Activated naive CD8-positive, alpha-beta T cell treated with anti-CD3 and anti-CD28 coated beads, Interleukin-2, amount 10 ng/mL, durations not matched to agents 7 days and 5 days (primary cell): ENCODE measurements at regions of chr13 and their contacts with region 1.

Region 1: DNA sequence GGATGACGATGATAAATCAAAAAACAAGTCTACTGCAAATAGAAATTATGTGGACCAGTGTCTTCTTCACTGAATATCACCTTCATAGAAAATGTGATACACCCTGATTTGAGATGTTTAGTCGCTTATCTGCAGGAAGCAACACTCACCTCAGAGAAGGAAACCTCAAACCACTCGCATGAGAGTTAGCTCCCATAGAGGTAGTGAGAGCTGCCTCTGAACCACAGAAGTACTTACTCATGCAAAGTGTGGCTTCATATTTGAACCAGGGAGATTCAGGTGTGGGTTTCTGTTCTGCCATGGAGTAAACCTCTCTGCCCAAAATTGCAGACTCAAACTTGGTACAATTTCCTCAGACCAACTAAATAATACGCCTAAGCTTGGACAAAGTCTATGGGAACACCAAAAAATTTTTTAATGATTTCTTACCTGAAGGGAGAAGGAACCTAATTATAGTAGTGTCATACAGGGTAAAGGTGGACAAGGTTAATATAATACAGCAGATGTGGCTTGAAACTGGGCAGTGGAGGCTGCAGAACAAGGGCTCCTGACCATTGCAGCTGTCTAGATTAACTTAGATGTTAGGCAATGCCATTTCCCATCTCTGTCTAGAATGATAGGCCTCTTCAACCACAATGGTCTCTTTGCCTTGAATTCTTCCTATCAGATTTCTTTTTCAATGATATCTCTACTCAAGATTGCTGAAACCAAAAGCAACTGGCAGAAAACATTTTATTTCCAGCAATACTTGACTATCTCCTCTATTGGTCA is 29.6 kb upstream of the RCBTB2 start:
- DNase-seq: no peak
- ATAC-seq: peak; percentile 87
- H3K4me3 Mint-ChIP-seq: peak overlapping the region; percentile 79
- H3K27ac Mint-ChIP-seq: peak overlapping the region; percentile 74
- H3K4me1 Mint-ChIP-seq: peaks cover 53% of the 10 kb centered on the region
- H3K27me3 Mint-ChIP-seq: peaks cover 49% of the 10 kb centered on the region

Region 2: DNA sequence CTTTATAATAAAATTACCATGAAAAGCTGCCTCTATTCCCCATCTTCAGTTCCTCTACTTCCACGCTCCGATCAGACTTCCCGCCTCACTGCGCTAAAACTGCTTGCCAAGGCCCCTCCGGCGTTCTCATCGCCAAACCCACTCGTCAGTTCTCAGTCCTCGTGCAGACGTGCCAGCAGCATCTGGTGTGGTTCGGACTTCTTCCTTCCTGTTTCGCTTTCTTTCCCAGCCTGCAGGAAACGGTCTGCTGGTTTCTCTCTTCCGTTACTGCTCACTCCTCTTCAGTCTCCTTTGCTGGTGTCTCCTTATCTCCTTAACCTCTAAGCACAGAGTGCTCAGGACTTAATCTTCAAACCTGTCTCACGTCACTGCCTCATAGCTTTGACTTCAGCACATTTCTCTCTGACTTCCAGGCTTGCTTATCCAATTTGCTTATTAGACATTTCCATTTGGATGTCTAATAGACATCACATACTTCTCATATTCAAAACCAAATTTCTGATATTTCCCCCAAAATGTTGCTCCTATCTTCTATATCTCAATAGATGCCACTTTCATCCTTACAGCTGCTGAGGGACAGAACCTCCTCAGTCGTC is 69.9 kb before region 1 on chr13:
- POLR2A ChIA-PET with region 1: interaction called, 11 read pairs
- DNase-seq: peak; percentile 70
- ATAC-seq: peak; percentile 85
- H3K4me3 Mint-ChIP-seq: no peak overlapping the region
- H3K27ac Mint-ChIP-seq: no peak overlapping the region
- H3K4me1 Mint-ChIP-seq: peaks cover 43% of the 10 kb centered on the region
- H3K27me3 Mint-ChIP-seq: no peaks in the 10 kb centered on the region

Region 3: GRCh38 chr13:48505597-48506091 is 56.8 kb before region 1 on chr13:
- POLR2A ChIA-PET with region 1: interaction called, 10 read pairs
- DNase-seq: peak; percentile 54
- ATAC-seq: peak; percentile 88
- H3K4me3 Mint-ChIP-seq: peak overlapping the region; percentile 67
- H3K27ac Mint-ChIP-seq: peak overlapping the region; percentile 92
- H3K4me1 Mint-ChIP-seq: peaks cover 62% of the 10 kb centered on the region
- H3K27me3 Mint-ChIP-seq: no peaks in the 10 kb centered on the region

Region 4: DNA sequence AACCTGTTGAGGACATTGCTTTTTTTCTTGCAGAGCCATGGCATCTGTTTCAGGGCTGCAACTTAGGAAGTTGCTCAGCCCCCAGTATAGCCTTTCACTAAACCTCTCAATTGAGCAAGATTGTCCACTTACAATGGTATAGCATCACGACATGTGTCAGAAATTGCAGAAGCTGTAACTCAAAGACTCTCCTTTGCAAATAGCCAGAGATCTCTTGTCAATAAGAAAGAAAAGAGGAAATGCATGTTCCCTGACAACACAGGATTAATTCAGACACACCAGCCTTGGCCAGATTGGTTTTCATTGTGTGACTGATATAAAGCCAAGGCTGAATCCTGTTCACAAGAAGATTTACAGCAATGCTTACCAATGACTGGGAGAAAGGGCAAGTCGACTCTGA is 52.6 kb after region 1 on chr13:
- POLR2A ChIA-PET with region 1: no interaction called
- DNase-seq: no peak
- ATAC-seq: no peak
- H3K4me3 Mint-ChIP-seq: no peak overlapping the region
- H3K27ac Mint-ChIP-seq: no peak overlapping the region
- H3K4me1 Mint-ChIP-seq: no peaks in the 10 kb centered on the region
- H3K27me3 Mint-ChIP-seq: peaks cover 2% of the 10 kb centered on the region